Activated CD4-positive, alpha-beta memory T cell treated with anti-CD3 and anti-CD28 coated beads for 36 hours (primary cell): ENCODE measurements at regions of chr3 and their contacts with region 1.

Region 1: GRCh38 chr3:119600732-119601131 is 3.0 kb downstream of the PLA1A start:
- DNase-seq: peak; percentile 70
- H3K4me3 Mint-ChIP-seq: no peak overlapping the region
- H3K27ac Mint-ChIP-seq: no peak overlapping the region
- H3K4me1 Mint-ChIP-seq: peaks cover 27% of the 10 kb centered on the region
- H3K27me3 Mint-ChIP-seq: peaks cover 2% of the 10 kb centered on the region

Region 2: GRCh38 chr3:119420196-119420595 is 180.5 kb before region 1 on chr3:
- CTCF ChIA-PET with region 1: no interaction called
- POLR2A ChIA-PET with region 1: no interaction called
- intact Hi-C with region 1: no loop called
- DNase-seq: no peak
- H3K4me3 Mint-ChIP-seq: no peak overlapping the region
- H3K27ac Mint-ChIP-seq: no peak overlapping the region
- H3K4me1 Mint-ChIP-seq: no peaks in the 10 kb centered on the region
- H3K27me3 Mint-ChIP-seq: no peaks in the 10 kb centered on the region

Region 3: GRCh38 chr3:119434703-119435102 is 166.0 kb before region 1 on chr3:
- CTCF ChIA-PET with region 1: no interaction called
- POLR2A ChIA-PET with region 1: no interaction called
- intact Hi-C with region 1: no loop called
- DNase-seq: no peak
- H3K4me3 Mint-ChIP-seq: no peak overlapping the region
- H3K27ac Mint-ChIP-seq: no peak overlapping the region
- H3K4me1 Mint-ChIP-seq: no peaks in the 10 kb centered on the region
- H3K27me3 Mint-ChIP-seq: no peaks in the 10 kb centered on the region

Region 4: DNA sequence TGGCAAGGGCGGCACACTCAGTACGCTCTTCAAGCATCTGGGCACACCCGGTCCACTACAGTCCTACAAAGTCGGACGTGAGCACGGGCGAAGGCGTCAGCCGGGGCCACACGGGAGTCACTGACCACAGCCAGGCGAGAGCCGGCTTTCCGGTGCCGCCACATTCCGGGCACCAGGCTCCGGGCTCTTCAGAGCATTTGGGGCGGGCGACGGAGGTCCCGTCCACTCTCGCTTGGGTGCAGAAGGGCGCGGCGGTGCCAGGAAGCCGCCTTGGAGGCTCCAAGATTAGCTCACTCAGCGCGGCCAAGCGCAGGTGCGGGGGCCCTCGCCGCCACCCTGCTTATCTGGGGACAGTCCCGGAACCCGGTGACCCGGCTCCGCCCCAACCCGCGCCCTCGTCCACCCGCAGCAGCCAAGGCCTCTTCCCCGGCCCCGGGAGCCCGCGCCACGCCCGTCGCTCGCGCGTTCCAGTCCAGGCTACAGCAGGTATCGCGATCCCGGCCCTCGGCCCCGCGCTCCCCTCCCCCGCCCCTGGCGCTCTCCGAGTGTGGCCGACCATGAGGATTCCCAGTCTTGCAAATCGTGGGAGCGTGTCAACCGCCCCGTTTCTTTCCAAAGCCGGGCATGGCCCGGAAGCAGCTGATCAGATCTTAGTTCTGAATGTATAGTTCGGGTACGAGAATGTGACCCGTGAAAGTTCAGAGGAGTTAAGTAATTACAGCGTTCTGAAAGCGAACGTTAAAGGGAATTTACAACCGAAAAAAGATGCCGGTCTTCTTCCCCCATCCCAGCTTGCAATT is 21.2 kb before region 1 on chr3 and contains the start of gene ADPRH:
- CTCF ChIA-PET with region 1: interaction called, 16 read pairs
- POLR2A ChIA-PET with region 1: no interaction called
- intact Hi-C with region 1: no loop called
- DNase-seq: peak; percentile 77
- H3K4me3 Mint-ChIP-seq: peak within 1 kb of the TSS; percentile 74
- H3K27ac Mint-ChIP-seq: peak within 1 kb of the TSS; percentile 61
- H3K4me1 Mint-ChIP-seq: peaks cover 26% of the 10 kb centered on the region
- H3K27me3 Mint-ChIP-seq: peaks cover 3% of the 10 kb centered on the region
- total RNA-seq, gene ADPRH: 7.7 to 8.6 TPM

Region 5: DNA sequence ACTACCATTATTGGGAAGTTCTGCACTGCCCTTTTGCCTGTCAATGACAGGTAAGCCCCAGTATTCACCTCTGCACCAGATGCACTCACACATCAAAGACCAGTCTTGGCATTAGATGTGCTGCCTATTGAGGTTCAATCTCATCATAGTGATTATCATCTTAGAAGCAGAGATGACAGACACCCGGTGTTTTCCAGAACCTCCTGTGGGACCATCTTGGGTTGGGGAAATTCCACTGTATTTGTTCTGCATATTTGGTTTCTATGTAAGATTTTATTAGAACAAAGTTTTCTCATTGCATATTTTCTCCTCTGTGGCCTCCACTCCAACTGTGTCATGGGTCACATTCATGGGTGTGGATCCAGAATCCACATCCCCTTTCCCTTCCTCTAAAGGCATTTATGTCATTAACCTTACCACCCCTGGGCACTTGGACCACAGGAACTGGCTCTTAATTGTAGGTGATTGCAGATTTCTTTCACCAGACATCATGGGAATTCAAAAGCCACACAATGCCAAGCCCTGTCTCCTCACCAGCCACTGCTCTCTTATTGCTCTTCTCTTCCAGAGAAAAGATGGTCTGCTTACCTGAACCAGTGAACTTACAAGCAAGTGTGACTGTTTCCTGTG is 28.2 kb after region 1 on chr3:
- CTCF ChIA-PET with region 1: interaction called, 5 read pairs
- POLR2A ChIA-PET with region 1: no interaction called
- intact Hi-C with region 1: loop called (anchors 1 kb)
- DNase-seq: no peak
- H3K4me3 Mint-ChIP-seq: no peak overlapping the region
- H3K27ac Mint-ChIP-seq: peak overlapping the region; percentile 77
- H3K4me1 Mint-ChIP-seq: peaks cover 41% of the 10 kb centered on the region
- H3K27me3 Mint-ChIP-seq: peaks cover 3% of the 10 kb centered on the region

Region 6: GRCh38 chr3:119643528-119643927 is 42.8 kb after region 1 on chr3:
- CTCF ChIA-PET with region 1: interaction called, 6 read pairs
- POLR2A ChIA-PET with region 1: no interaction called
- intact Hi-C with region 1: loop called (anchors 1 kb)
- DNase-seq: no peak
- H3K4me3 Mint-ChIP-seq: no peak overlapping the region
- H3K27ac Mint-ChIP-seq: peak overlapping the region; percentile 46
- H3K4me1 Mint-ChIP-seq: peaks cover 43% of the 10 kb centered on the region
- H3K27me3 Mint-ChIP-seq: no peaks in the 10 kb centered on the region

Region 7: DNA sequence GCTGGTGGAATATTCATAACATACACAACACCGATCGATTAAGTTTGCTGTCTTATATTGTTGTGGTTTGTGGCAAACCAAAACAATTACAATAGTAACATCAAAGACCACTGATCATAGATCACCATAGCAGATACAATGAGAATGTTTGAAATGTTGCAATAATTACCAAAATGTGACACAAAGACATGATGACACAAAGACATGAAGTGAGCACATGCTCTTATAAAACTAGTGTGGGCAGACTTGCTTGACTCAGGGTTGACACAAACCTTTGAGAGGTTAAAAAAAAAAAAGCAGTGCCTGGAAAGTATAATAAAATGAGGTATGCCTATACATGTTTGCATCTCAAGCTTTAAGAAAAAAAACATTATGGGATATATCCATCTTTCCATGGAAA is 311.5 kb after region 1 on chr3:
- CTCF ChIA-PET with region 1: no interaction called
- POLR2A ChIA-PET with region 1: no interaction called
- intact Hi-C with region 1: no loop called
- DNase-seq: no peak
- H3K4me3 Mint-ChIP-seq: no peak overlapping the region
- H3K27ac Mint-ChIP-seq: peak overlapping the region; percentile 69
- H3K4me1 Mint-ChIP-seq: peaks cover 24% of the 10 kb centered on the region
- H3K27me3 Mint-ChIP-seq: no peaks in the 10 kb centered on the region